ENCODE measurements at regions of chr2 and their contacts with region 1.

Region 1: DNA sequence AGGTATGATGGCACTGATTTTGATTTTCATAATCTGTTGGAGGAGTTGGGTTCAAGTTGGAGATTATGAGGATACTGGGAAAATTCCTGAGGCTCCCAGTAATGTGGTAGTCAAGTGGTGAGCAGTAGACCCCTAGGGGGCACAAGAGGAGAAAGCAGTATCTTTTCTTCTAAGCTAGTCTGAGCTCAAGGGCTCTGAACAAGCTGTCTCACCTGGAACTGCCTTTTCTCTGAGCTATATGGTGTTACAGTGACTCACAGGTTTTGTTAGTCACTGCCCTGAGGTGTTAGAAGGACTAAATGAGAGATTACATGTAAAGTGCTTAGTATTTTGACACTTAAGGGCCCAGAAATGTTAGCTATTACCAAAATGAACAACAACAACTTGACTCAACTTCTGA is 42.2 kb downstream of the CD302 start:
- DNase-seq: peak in 2 of 9 experiments; percentile 10 to 24
- ATAC-seq: peak; percentile 61
- H3K4me3 ChIP-seq: no peak overlapping the region
- H3K4me3 Mint-ChIP-seq: no peak overlapping the region
- H3K27ac ChIP-seq: no peak overlapping the region
- H3K27ac Mint-ChIP-seq: no peak overlapping the region
- H3K4me1 ChIP-seq: no peaks in the 10 kb centered on the region
- H3K4me1 Mint-ChIP-seq: peaks cover 32% of the 10 kb centered on the region
- H3K27me3 ChIP-seq: no peaks in the 10 kb centered on the region
- H3K27me3 Mint-ChIP-seq: no peaks in the 10 kb centered on the region
- CTCF ChIP-seq: no peak

Region 2: GRCh38 chr2:159411460-159411859 is 344.3 kb before region 1 on chr2:
- CTCF ChIA-PET with region 1: no interaction called
- POLR2A ChIA-PET with region 1: no interaction called
- intact Hi-C with region 1: no loop called
- DNase-seq: no peak
- ATAC-seq: no peak
- H3K4me3 ChIP-seq: no peak overlapping the region
- H3K4me3 Mint-ChIP-seq: no peak overlapping the region
- H3K27ac ChIP-seq: no peak overlapping the region
- H3K27ac Mint-ChIP-seq: no peak overlapping the region
- H3K4me1 ChIP-seq: no peaks in the 10 kb centered on the region
- H3K4me1 Mint-ChIP-seq: no peaks in the 10 kb centered on the region
- H3K27me3 ChIP-seq: no peaks in the 10 kb centered on the region
- H3K27me3 Mint-ChIP-seq: no peaks in the 10 kb centered on the region
- CTCF ChIP-seq: no peak

Region 3: DNA sequence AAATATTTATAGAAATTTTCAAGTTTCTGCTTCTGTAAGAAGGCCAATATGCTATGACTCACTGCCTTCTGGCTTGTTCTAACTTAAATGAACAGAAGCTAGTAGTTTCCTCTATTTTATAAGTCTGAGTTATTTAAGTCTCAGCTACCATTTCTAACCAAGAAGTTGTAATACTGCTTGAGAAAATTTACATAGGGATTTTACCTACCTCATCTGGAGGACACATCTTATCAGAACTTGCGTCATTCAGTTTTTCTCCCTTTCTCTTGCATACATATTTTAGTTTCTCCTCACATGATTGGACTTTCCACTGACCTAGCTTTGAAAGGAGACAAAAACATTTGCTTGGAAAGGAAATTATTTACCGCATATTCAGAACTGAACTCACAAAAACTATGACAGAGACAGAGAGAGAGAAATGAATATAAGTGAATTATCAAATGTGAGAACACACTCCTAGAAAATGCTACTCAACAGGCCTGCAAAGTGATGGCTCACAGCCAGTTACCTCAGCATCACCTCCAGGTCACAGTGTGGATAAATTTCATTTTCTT is 123.3 kb after region 1 on chr2:
- CTCF ChIA-PET with region 1: no interaction called
- POLR2A ChIA-PET with region 1: no interaction called
- intact Hi-C with region 1: loop called in 1 of 2 experiments (anchors 10 kb)
- DNase-seq: no peak
- ATAC-seq: no peak
- H3K4me3 ChIP-seq: no peak overlapping the region
- H3K4me3 Mint-ChIP-seq: no peak overlapping the region
- H3K27ac ChIP-seq: no peak overlapping the region
- H3K27ac Mint-ChIP-seq: no peak overlapping the region
- H3K4me1 ChIP-seq: no peaks in the 10 kb centered on the region
- H3K4me1 Mint-ChIP-seq: no peaks in the 10 kb centered on the region
- H3K27me3 ChIP-seq: no peaks in the 10 kb centered on the region
- H3K27me3 Mint-ChIP-seq: no peaks in the 10 kb centered on the region
- CTCF ChIP-seq: no peak

Measured in CD8-positive, alpha-beta T cell (primary cell).